Right ventricle myocardium inferior (tissue), 1 donor: ENCODE measurements at regions of chr5 and their contacts with region 1.

Region 1: GRCh38 chr5:96336351-96336985 is 96.6 kb downstream of the PCSK1 start:
- DNase-seq: no peak
- ATAC-seq: peak; percentile 77

Region 2: DNA sequence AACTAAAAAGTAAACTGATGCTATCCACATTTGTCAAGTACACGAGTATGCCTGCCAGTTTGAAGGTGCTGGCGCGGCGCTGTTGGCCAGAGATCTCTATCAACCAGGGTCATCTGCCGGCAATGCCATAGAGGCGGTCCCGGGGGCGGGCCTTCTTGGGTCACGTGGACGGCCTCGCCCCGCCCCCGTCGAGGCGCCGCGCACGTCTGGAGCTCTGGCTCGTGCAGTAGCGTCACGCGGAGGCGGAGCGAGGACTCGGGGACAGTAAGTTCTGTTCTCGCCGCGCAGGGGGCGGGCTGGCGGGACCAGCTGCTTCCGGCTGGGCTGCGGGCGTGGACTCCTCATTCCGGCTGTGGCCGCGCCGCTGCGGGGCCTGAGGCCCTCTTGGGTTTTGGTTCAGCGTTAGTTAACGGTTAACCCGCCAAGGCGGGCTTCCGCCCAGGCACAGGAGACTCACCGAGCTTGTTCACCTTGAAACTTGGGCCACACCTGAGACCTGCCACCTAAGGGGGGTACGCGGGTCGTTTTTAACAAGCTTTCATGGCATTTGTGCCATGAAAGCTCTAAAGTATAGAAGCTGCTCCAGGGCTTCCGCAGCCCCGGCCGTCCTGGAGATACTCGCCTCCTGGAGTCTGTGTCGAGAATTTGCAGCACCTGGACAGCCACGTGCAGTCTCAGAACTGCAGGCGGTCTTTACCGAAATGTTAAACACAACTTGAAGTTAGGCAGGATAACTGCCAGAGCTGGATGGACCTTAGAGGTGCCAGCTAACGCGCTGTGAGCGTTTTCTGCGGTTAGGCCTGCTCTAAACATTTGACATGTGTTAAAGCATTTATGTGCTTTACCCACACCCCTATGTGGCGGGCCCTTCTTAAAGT is 689.7 kb before region 1 on chr5 and contains the start of gene RFESD:
- intact Hi-C with region 1: loop called (anchors 5 kb)
- DNase-seq: peak; percentile 100
- ATAC-seq: peak; percentile 99
- total RNA-seq, gene RFESD: 3.0 TPM

Region 3: DNA sequence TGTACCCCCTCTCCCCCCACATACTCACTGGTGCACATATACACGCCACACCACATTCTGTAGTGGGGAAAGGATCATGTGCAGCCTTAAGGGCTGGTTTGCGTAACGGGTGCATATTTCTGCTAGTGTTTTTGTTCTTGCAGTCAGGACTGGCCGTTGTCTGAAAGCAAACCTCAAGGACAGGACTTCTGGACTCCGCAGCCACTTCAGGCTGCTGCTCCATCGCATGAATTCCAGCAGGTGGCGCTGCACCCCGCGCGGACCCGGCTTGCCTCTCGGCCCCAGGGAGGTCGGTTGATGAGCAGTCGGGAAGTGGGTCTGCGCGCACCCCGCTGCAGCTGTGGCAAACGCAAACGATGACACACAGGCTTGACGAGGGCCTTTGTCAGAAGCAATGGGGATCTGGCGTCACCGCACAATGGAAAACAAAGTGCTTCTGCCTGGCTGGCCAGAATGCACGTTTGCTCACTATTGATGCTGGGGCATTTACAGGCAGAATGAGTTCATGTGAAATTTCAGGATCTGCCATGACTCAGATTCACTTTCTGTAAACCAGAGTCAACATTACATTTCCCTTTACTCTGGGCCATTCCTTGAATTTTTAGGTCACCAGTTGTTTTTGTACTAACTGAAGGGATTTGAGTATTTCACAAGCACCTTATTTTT is 477.7 kb before region 1 on chr5:
- intact Hi-C with region 1: loop called (anchors 1 kb)
- DNase-seq: peak; percentile 96
- ATAC-seq: peak; percentile 74

Region 4: DNA sequence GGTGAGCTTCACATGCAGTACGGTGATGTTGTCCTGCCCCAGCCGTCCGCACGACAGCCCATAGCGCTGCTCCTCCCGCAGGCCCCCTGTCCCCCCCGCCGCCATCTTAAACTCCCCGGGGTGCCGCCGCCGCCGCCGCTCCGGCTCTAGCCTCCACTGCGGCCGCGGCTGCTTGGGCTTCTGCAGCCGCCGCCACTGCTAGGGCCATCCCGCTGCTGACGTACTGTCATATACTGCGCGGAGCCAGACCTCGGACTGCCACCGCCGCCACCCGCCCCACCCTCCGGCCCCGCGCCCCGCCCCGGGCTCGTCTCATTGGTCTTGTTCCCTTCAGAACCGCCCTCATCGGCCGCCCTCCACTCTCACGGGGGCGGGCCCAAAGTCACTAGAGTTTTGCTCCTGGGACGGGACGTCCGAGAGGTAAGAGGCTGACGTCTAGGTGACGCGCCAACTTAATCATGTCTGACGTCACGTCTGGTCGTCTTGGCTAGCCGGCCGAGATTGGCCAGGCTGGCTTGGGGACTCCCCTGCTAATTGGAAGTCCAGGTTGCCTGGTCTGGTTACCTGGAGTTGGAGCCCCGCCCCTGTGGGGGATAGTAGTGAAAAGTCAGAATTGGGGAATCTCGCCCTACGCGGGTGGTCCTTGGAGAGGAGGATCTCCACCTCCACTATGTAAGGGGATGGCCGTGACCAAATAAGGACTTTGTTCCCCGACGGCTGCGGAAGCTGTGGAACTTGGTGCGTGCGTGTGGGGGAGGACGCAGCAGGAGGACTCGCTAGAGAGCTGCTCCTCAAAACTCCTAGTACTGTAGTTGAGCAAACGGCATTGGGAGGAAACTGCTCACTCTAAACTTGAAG is 374.6 kb before region 1 on chr5 and contains the start of gene ELL2:
- intact Hi-C with region 1: loop called (anchors 1 kb)
- DNase-seq: peak; percentile 99
- ATAC-seq: peak; percentile 93
- total RNA-seq, gene ELL2: 26.7 TPM

Region 5: DNA sequence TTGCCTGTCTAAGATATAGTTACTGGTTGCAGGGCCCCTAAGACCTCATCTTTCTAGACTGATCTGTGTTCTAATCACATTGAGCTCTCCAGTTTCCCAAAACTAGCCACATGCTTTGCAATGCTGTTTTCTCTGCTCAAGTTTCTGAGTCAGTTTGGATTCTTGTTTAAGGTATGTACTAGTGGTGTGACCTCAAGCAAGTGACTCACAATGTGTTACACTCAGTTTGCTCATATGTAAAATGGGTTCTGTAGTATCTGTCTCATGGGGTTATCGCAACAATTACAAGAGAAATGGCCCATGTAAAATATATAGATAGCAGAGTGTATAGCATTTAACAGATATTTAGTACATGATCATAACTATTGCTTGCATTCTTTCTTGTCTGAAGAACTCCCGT is 221.7 kb before region 1 on chr5:
- intact Hi-C with region 1: loop called (anchors 5 kb)
- DNase-seq: no peak
- ATAC-seq: no peak